Heart left ventricle (tissue), 16 donors: ENCODE measurements at regions of chr2 and their contacts with region 1.

Region 1: DNA sequence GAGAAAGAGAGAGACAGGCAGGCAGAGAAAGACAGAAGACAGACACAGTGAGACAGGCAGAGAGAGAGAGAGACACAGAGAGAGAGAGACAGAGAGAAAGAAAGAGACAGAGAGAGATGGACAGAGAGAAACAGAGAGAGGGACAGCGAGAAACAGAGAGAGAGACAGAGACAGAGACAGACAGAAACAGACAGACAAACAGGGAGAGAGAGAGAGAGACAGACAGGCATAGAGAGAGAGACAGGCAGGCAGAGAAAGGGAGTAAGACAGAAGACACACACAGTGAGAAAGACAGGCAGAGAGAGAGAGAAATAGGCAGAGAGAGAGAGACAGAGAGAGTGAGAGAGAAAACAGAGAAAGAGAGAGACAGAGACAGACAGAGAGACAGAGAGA is 105.3 kb upstream of the ANKRD30BL start:
- DNase-seq: no peak
- ATAC-seq: no peak
- H3K4me3 ChIP-seq: peak overlapping the region in 1 of 12 donors; percentile 49
- H3K27ac ChIP-seq: no peak overlapping the region
- H3K4me1 ChIP-seq: peaks cover 0 to 13% (median 3%) of the 10 kb centered on the region in 12 donors
- H3K27me3 ChIP-seq: peaks cover 0 to 44% (median 5%) of the 10 kb centered on the region in 9 donors
- CTCF ChIP-seq: no peak
- POLR2A ChIP-seq: no peak

Region 2: DNA sequence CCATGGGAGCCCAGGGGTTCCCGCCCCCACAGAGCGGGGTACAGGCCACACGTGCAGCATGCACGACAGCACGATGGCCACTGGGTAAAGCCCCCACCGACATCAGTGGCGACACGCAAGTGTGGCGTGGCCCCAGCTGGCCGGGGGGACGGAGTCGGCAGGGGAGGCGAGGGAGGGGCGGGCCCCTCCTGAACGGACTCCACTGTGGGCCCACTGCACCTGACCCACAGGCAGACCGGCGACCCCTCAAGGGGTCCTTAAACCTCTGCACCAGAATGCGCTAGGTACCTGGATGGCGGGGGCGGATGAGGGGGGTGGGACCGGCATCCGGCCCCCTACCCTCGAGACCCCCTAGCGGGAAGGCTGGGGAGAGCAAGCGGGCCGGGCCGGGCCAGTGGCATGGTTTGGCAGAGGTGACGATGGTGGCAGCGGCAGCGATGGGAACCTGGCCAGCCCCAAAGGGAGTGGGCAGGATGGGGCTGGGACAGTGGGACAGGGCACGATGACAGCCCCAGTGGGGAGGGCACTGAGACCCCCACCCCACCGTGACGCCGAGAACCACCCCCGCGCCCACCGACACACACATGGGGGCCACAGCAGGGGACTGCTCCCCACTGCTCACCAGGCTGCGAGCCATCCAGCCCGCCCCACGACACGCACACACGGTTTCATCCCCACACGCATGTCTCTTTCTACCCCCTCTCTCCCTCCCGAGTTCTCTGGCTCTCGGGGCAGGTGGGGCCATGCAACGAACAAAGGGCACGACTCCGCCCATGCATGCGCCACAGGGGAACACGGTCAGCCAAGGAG is 13.4 kb before region 1 on chr2:
- intact Hi-C with region 1: no loop called
- DNase-seq: no peak
- ATAC-seq: peak in 1 of 4 donors; percentile 38
- H3K4me3 ChIP-seq: no peak overlapping the region
- H3K27ac ChIP-seq: no peak overlapping the region
- H3K4me1 ChIP-seq: peaks cover 0 to 11% (median 0%) of the 10 kb centered on the region in 12 donors
- H3K27me3 ChIP-seq: peaks cover 16 to 43% (median 24%) of the 10 kb centered on the region in 9 donors
- CTCF ChIP-seq: no peak
- POLR2A ChIP-seq: no peak

Region 3: DNA sequence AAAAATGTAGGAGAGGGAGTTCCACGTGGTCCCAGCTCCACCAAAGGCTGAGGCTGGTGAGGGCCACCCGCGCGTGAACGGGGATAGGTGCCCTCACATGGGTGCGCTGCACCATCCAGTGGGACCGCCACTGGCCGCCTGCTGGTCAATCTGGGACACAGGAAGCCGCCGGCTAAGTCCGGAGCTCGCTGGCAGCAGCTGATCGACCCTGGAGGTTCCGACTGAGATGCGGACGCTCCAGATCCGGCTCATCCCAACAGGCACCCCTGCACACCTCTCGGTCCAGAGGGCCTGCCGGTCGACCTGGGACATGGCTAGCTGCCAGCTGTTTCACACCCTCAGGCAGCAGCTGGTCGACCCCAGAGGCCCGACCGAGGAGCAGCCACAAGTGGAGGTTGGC is 11.2 kb after region 1 on chr2:
- intact Hi-C with region 1: no loop called
- DNase-seq: no peak
- ATAC-seq: no peak
- H3K4me3 ChIP-seq: no peak overlapping the region
- H3K27ac ChIP-seq: no peak overlapping the region
- H3K4me1 ChIP-seq: no peaks in the 10 kb centered on the region
- H3K27me3 ChIP-seq: peaks cover 0 to 3% (median 0%) of the 10 kb centered on the region in 9 donors
- CTCF ChIP-seq: no peak
- POLR2A ChIP-seq: no peak

Region 4: DNA sequence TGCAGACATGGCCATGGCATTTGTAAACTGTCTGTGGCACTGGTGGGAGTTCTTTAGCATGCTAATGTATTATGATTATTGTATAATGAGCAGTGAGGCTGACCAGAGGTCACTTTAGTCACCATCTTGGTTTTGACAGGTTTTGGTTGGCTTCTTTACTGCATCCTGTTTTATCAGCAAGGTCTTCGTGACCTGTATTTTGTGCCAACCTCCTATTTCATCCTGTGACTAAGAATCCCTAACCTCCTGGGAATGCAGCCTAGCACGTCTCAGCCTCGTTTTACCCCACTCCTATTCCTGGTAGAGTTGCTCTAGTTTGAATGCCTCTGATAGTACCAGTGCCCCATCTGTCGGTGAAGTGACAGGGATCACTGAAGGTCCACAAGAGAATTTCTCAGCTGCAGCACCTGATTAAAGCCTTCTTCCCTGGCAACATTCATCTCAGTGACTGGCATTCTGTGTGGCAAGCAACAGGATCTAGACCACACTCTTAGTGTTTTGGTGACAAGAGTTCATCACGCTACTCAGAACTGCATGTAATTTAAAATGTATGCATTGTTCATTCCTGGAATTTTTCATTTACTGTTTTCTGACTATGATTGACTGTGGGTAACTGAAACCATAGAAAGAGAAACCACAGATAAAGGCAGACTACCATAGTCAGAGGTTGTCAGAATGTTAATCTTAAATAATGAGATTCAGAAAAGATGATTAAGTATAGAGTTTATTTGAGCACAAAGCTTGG is 106.5 kb after region 1 on chr2:
- intact Hi-C with region 1: no loop called
- DNase-seq: no peak
- ATAC-seq: no peak
- H3K4me3 ChIP-seq: no peak overlapping the region
- H3K27ac ChIP-seq: no peak overlapping the region
- H3K4me1 ChIP-seq: peaks cover 0 to 6% (median 0%) of the 10 kb centered on the region in 12 donors
- H3K27me3 ChIP-seq: peaks cover 0 to 2% (median 0%) of the 10 kb centered on the region in 9 donors
- CTCF ChIP-seq: no peak
- POLR2A ChIP-seq: no peak

Region 5: GRCh38 chr2:132448771-132449170 is 181.7 kb after region 1 on chr2:
- intact Hi-C with region 1: loop called in 1 of 10 experiments (anchors 10 kb)
- DNase-seq: no peak
- ATAC-seq: peak in 1 of 4 donors; percentile 55
- H3K4me3 ChIP-seq: no peak overlapping the region
- H3K27ac ChIP-seq: no peak overlapping the region
- H3K4me1 ChIP-seq: peaks cover 0 to 13% (median 0%) of the 10 kb centered on the region in 12 donors
- H3K27me3 ChIP-seq: no peaks in the 10 kb centered on the region
- CTCF ChIP-seq: peak; percentile 23 to 56 (median 30)
- POLR2A ChIP-seq: no peak

Region 6: GRCh38 chr2:133171393-133172004 is 904.4 kb after region 1 on chr2:
- intact Hi-C with region 1: loop called in 2 of 10 experiments (anchors 10 kb)
- DNase-seq: no peak
- ATAC-seq: no peak
- H3K4me3 ChIP-seq: no peak overlapping the region
- H3K27ac ChIP-seq: no peak overlapping the region
- H3K4me1 ChIP-seq: no peaks in the 10 kb centered on the region
- H3K27me3 ChIP-seq: no peaks in the 10 kb centered on the region
- CTCF ChIP-seq: peak in 11 of 12 donors; percentile 27 to 63 (median 44)
- POLR2A ChIP-seq: no peak